Sigmoid colon (tissue), 7 donors: ENCODE measurements at regions of chr3 and their contacts with region 1.

Region 1: GRCh38 chr3:191376516-191377141 is 46.3 kb upstream of the UTS2B start:
- DNase-seq: no peak
- H3K4me3 ChIP-seq: no peak overlapping the region
- H3K27ac ChIP-seq: peak overlapping the region; percentile 57 to 75 (median 65)
- H3K4me1 ChIP-seq: peaks cover 0 to 45% (median 39%) of the 10 kb centered on the region in 4 donors
- H3K27me3 ChIP-seq: no peaks in the 10 kb centered on the region
- CTCF ChIP-seq: no peak
- EP300 ChIP-seq: no peak
- POLR2A ChIP-seq: no peak

Region 2: DNA sequence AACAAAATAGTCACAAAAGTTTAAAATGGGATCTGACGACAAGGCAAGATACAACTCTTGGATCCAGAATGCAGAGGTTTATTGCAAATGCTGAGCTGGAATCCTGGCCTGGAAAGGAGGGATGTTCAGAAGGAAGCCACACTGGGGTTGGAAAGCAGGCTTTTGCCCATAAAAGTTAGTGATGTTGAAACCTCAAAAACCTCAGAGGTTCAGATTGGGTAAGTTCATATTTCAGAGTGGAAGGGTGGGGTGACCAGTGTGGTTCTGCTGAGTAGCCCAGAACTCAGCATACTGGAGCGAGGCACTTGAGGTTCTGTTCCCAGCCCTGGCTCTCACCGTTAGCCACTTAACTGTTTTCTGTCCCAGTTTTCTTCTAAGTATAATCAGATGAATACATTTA is 291.5 kb before region 1 on chr3:
- intact Hi-C with region 1: no loop called
- DNase-seq: no peak
- H3K4me3 ChIP-seq: no peak overlapping the region
- H3K27ac ChIP-seq: no peak overlapping the region
- H3K4me1 ChIP-seq: no peaks in the 10 kb centered on the region
- H3K27me3 ChIP-seq: no peaks in the 10 kb centered on the region
- CTCF ChIP-seq: no peak
- EP300 ChIP-seq: no peak
- POLR2A ChIP-seq: no peak

Region 3: GRCh38 chr3:191244242-191244867 is 132.3 kb before region 1 on chr3:
- intact Hi-C with region 1: loop called (anchors 10 kb)
- DNase-seq: no peak
- H3K4me3 ChIP-seq: no peak overlapping the region
- H3K27ac ChIP-seq: no peak overlapping the region
- H3K4me1 ChIP-seq: no peaks in the 10 kb centered on the region
- H3K27me3 ChIP-seq: no peaks in the 10 kb centered on the region
- CTCF ChIP-seq: peak in 2 of 4 experiments; percentile 25 to 42
- EP300 ChIP-seq: no peak
- POLR2A ChIP-seq: no peak

Region 4: GRCh38 chr3:191329654-191330528 is 46.7 kb before region 1 on chr3 and contains the start of gene UTS2B:
- intact Hi-C with region 1: loop called (anchors 5 kb)
- DNase-seq: peak; percentile 69
- H3K4me3 ChIP-seq: peak within 1 kb of the TSS; percentile 65 to 91 (median 90)
- H3K27ac ChIP-seq: peak within 1 kb of the TSS; percentile 92 to 96 (median 92)
- H3K4me1 ChIP-seq: peaks cover 0 to 52% (median 36%) of the 10 kb centered on the region in 4 donors
- H3K27me3 ChIP-seq: no peaks in the 10 kb centered on the region
- CTCF ChIP-seq: no peak
- EP300 ChIP-seq: no peak
- POLR2A ChIP-seq: no peak
- total RNA-seq, gene UTS2B: 0.28 to 0.71 TPM in 2 of 4 donors, not detected in the others